HEK293 (cell line): ENCODE measurements at regions of chr19 and their contacts with region 1.

Region 1: DNA sequence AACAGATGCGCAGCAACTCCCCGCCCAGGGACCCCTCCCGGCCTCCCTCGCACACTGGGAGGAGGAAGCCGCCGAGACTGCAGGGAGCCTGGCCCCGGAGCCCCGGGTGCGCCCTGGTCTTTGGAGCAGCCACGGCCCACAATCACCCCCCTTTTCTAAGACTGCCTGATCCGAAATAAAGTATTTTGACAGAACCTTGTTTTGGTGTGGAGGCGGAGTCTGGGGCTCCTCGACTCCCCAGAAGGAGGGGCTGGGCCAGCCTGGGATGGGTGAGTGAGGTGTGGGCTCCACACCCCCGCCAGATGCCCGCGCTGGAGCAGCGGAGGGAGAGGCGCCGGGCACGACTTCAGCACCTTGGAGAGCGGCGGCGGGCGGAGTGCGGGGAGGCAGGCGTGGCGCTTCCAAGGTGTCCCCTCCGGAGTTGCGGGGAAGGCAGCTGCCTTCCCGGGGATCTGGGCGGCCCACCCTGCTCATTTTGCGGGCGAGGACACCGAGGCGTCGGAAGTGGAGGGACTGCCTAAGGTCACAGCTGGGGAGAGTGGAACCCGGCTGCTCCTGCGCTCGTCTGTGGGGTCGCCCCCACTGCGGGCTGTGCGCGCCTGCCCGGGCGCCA is 9.4 kb downstream of the SIRT6 start:
- H3K4me3 ChIP-seq: no peak overlapping the region
- H3K27ac ChIP-seq: no peak overlapping the region
- H3K4me1 ChIP-seq: no peaks in the 10 kb centered on the region
- CTCF ChIP-seq: no peak

Region 2: DNA sequence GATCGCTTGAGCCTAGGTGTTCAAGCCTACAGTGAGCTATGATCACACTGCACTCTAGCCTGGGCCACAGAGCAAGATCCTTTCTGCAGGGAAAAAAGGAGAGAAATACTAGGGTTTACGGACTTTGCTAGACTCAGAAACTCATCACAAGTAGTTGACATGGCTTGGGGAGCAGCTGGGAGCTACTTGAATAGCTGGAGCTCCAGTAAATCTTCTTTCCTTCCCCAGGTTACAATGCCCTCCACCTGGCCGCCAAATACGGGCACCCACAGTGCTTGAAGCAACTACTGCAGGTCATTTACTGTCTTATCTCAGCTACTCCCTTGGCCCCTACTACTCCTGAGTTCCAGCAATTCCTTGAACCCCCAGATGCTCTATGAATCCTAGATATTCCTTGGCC is 28.8 kb after region 1 on chr19:
- CTCF ChIA-PET with region 1: interaction called, 10 read pairs
- POLR2A ChIA-PET with region 1: no interaction called
- H3K4me3 ChIP-seq: no peak overlapping the region
- H3K27ac ChIP-seq: no peak overlapping the region
- H3K4me1 ChIP-seq: no peaks in the 10 kb centered on the region
- CTCF ChIP-seq: no peak

Region 3: DNA sequence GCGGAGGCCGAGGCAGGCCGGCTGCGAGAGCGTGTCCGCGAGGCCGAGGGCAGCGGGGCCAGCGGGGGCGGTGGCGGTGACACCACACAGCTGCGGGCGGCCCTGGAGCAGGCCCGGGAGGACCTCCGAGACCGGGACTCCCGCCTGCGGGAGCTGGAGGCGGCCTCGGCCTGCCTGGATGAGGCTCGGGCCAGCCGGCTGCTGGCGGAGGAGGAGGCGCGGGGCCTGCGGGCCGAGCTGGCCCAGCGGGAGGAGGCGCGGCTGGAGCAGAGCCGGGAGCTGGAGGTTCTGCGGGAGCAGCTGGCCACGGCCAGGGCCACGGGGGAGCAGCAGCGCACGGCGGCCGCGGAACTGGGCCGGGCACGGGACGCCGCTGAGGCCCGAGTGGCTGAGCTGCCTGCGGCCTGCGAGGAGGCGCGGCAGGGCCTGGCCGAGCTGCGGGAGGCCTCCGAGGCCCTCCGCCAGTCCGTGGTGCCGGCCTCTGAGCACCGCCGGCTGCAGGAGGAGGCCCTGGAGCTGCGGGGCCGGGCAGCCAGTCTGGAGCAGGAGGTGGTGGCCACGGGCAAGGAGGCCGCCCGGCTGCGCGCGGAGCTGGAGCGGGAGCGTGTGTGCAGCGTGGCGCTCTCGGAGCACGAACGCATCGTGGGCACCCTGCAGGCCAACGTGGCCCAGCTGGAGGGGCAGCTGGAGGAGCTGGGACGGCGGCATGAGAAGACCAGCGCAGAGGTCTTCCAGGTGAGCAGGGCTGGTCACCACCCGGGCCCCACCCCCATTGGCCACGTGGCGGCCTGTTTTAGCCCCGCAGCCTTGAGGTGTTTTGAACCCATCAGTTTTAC is 44.7 kb after region 1 on chr19:
- CTCF ChIA-PET with region 1: no interaction called
- POLR2A ChIA-PET with region 1: no interaction called
- H3K4me3 ChIP-seq: no peak overlapping the region
- H3K27ac ChIP-seq: no peak overlapping the region
- H3K4me1 ChIP-seq: no peaks in the 10 kb centered on the region
- CTCF ChIP-seq: no peak

Region 4: DNA sequence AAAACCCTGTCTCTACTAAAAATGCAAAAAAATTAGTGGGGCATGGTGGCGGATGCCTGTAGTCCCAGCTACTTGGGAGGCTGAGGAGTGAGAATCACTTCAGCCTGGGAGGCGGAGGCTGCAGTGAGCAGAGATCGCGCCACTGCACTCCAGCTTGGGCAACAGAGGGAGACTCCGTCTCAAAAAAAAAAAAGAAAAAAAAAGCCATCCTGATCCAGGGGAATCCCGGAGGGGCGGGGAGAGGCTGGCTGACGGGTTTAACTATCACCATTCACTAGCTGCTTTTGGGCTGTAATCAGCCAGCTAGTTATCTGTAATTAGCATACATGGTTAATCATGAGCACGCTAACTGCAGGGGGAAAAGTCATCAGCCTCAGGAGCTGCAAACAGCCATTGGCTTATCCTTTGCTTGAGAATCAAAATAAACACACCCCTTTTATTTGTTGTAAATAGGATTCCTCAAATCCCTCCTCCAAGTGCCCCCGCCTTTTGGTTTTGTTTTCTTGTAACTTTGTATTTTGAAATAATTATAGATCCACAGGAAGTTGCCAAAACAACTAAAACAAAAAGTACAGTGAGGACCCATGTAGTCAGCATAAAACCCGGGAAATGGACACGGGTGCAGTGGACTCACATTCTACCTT is 141.0 kb after region 1 on chr19:
- CTCF ChIA-PET with region 1: no interaction called
- POLR2A ChIA-PET with region 1: no interaction called
- H3K4me3 ChIP-seq: no peak overlapping the region
- H3K27ac ChIP-seq: no peak overlapping the region
- H3K4me1 ChIP-seq: no peaks in the 10 kb centered on the region
- CTCF ChIP-seq: no peak

Region 5: GRCh38 chr19:4390567-4391305 is 217.8 kb after region 1 on chr19:
- CTCF ChIA-PET with region 1: no interaction called
- POLR2A ChIA-PET with region 1: no interaction called
- H3K4me3 ChIP-seq: no peak overlapping the region
- H3K27ac ChIP-seq: peak overlapping the region; percentile 32
- H3K4me1 ChIP-seq: peaks cover 13% of the 10 kb centered on the region
- CTCF ChIP-seq: no peak